ENCODE measurements at regions of chr12 and their contacts with region 1.

Region 1: DNA sequence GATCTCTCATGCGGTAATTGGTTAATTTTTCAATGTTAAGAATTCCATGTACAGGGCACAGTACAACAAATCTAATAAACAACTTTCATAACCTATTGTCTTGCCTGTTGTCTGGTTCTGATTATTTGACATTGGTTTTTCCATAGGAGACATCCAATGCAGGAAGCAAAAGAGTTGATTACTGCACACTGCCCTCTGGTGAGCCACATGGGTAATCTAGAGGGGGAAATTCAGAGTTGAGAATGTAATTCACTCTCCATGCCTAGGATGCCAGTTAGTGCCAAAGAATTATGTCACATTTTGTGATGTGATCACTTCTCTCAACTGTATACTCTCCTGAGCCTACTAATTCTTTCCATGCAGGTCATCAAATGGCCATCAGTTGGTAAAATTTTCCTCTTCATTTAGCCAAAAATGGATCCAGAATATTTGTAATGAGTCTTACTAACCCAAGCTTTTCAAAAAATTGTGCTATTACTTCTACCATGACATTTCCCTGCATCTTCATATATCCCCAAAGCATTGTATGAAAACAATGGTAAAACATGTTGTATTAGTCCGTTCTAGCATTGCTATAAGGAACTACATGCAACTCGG is 17.7 kb upstream of the CCDC91 start:
- DNase-seq: peak; percentile 68
- ATAC-seq: peak; percentile 93
- H3K4me3 ChIP-seq: no peak overlapping the region
- H3K27ac ChIP-seq: no peak overlapping the region
- H3K4me1 ChIP-seq: no peaks in the 10 kb centered on the region
- H3K27me3 ChIP-seq: no peaks in the 10 kb centered on the region
- CTCF ChIP-seq: peak; percentile 80
- POLR2A ChIP-seq: no peak
- RAD21 ChIP-seq: peak; percentile 91

Region 2: GRCh38 chr12:27751386-27752047 is 421.0 kb before region 1 on chr12:
- CTCF ChIA-PET with region 1: no interaction called
- POLR2A ChIA-PET with region 1: no interaction called
- dilution Hi-C with region 1: no loop called
- in situ Hi-C with region 1: loop called (anchors 10 kb)
- intact Hi-C with region 1: no loop called
- DNase-seq: no peak
- ATAC-seq: no peak
- H3K4me3 ChIP-seq: no peak overlapping the region
- H3K27ac ChIP-seq: no peak overlapping the region
- H3K4me1 ChIP-seq: peaks cover 6% of the 10 kb centered on the region
- H3K27me3 ChIP-seq: no peaks in the 10 kb centered on the region
- CTCF ChIP-seq: no peak
- POLR2A ChIP-seq: no peak
- RAD21 ChIP-seq: no peak

Region 3: GRCh38 chr12:27840244-27840999 is 332.1 kb before region 1 on chr12:
- CTCF ChIA-PET with region 1: no interaction called
- POLR2A ChIA-PET with region 1: no interaction called
- dilution Hi-C with region 1: no loop called
- in situ Hi-C with region 1: no loop called
- intact Hi-C with region 1: loop called (anchors 5 kb)
- DNase-seq: no peak
- ATAC-seq: 0 out of 2 replicates have a peak, but pooled peaks have one; percentile 30
- H3K4me3 ChIP-seq: no peak overlapping the region
- H3K27ac ChIP-seq: no peak overlapping the region
- H3K4me1 ChIP-seq: peaks cover 6% of the 10 kb centered on the region; the same call in 1 of the 2 replicates
- H3K27me3 ChIP-seq: no peaks in the 10 kb centered on the region
- CTCF ChIP-seq: peak; percentile 58
- POLR2A ChIP-seq: no peak
- RAD21 ChIP-seq: peak; percentile 33; the same call in 1 of the 2 replicates

Region 4: DNA sequence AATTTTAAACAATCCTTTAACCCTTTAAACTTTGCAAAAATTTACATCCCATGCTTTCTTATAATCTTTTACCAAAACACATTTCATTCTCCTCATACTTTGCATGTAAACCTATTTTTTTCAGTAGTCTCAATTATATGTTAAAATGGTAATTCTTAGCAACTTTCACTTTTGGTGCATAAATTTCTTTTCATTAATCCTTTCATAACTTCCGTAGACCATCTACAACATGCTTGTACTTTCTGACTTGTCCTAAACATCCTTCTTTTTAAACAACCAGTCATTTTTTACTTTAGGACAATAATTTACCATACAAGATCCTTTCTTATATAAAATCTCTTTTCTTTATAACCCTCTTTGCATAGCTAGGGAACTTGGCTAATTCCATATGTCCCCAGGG is 37.2 kb after region 1 on chr12:
- CTCF ChIA-PET with region 1: no interaction called
- POLR2A ChIA-PET with region 1: no interaction called
- dilution Hi-C with region 1: no loop called
- in situ Hi-C with region 1: no loop called
- intact Hi-C with region 1: no loop called
- DNase-seq: no peak
- ATAC-seq: no peak
- H3K4me3 ChIP-seq: no peak overlapping the region
- H3K27ac ChIP-seq: no peak overlapping the region
- H3K4me1 ChIP-seq: no peaks in the 10 kb centered on the region
- H3K27me3 ChIP-seq: no peaks in the 10 kb centered on the region
- CTCF ChIP-seq: no peak
- POLR2A ChIP-seq: no peak
- RAD21 ChIP-seq: no peak

Region 5: GRCh38 chr12:28998637-28999120 is 826.1 kb after region 1 on chr12:
- CTCF ChIA-PET with region 1: no interaction called
- POLR2A ChIA-PET with region 1: no interaction called
- dilution Hi-C with region 1: no loop called
- in situ Hi-C with region 1: no loop called
- intact Hi-C with region 1: loop called (anchors 1 kb)
- DNase-seq: peak; percentile 56
- ATAC-seq: peak; percentile 88
- H3K4me3 ChIP-seq: no peak overlapping the region
- H3K27ac ChIP-seq: no peak overlapping the region
- H3K4me1 ChIP-seq: no peaks in the 10 kb centered on the region
- H3K27me3 ChIP-seq: no peaks in the 10 kb centered on the region
- CTCF ChIP-seq: peak; percentile 61
- POLR2A ChIP-seq: no peak
- RAD21 ChIP-seq: peak; percentile 64